ENCODE measurements at regions of chr1 and their contacts with region 1.

Region 1: DNA sequence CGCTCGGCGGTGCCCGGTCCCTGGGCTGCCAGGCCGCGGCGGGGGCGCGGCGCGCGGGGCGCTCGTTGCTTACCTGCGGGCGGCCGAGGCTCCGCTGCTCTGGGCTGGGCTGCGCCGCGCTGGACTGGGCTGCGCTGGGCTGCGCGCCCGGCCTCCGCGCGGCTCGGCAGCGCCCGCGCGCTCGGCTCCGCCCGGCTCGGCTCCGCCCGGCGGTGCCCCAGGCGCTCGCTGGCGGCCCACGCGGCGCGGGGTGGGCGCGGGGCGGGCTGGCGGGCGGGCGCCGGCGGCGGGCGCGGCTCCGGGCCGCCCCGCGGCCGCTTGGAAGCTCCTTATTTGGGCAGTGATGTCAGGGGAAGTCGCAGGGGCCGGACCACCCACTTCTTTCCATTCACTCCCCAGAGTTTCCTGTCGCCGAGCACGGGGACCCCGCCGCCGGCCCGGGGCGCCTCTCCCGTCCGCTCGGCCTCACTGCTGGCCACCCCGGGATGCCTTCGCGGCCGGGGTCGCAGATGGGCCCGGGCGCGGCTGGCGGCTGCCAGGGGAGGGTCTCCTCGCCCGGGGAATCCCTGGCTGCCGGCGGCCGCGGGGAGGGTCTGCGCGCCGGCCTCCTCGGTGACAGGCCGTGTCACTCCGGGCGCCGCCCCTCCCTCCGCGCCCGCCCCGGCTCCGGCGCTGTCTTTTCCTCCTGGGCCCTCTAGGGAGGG is 177.7 kb upstream of the EDN2 start:
- DNase-seq: peak; percentile 75
- H3K4me3 Mint-ChIP-seq: peak overlapping the region; percentile 60
- H3K27ac Mint-ChIP-seq: peak overlapping the region; percentile 28
- H3K4me1 Mint-ChIP-seq: peaks cover 75% of the 10 kb centered on the region
- H3K27me3 Mint-ChIP-seq: no peaks in the 10 kb centered on the region

Region 2: GRCh38 chr1:41639332-41639936 is 22.8 kb before region 1 on chr1:
- intact Hi-C with region 1: loop called (anchors 1 kb)
- DNase-seq: no peak
- H3K4me3 Mint-ChIP-seq: peak overlapping the region; percentile 60
- H3K27ac Mint-ChIP-seq: no peak overlapping the region
- H3K4me1 Mint-ChIP-seq: peaks cover 46% of the 10 kb centered on the region
- H3K27me3 Mint-ChIP-seq: no peaks in the 10 kb centered on the region

Region 3: DNA sequence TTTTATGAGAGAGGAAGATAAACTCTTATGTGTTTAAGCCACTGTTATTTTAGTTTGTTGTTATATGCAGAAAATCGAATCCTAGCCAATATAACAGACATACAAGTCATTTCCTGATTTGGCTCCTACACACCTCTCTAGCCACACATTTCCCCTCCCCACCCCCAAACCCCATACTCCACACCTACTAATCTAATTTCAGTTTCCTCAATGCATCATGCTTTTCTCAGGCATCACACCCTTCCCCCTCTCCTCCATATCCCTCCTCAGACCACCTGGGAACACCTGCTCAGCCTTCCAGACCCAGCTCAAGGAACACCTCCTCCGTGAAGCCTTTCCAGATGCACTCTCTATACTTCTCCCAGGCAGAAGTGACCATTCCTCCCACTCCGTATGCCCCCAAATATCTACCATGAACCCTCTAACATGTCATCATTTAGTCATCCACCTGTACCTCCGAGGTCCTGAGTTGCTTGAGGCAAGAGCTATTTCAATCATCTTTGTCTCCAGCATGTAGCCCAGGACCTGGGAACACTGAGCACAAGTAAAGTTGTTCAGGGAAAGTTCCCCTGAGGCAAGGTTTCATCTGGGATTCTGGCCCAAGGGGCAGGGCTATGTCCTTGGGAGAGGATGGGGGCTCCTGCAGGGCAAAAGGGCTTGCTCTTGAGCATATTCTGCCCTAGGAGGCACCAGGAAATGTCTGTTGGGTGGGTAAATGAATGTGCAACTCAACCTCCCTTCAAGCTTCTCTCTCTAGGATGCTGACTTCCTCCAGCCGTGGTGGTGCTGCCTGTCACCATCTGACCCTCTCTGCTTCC is 129.7 kb after region 1 on chr1:
- intact Hi-C with region 1: loop called (anchors 5 kb)
- DNase-seq: no peak
- H3K4me3 Mint-ChIP-seq: no peak overlapping the region
- H3K27ac Mint-ChIP-seq: peak overlapping the region; percentile 80
- H3K4me1 Mint-ChIP-seq: peaks cover 49% of the 10 kb centered on the region
- H3K27me3 Mint-ChIP-seq: no peaks in the 10 kb centered on the region

Region 4: GRCh38 chr1:41812051-41812450 is 149.8 kb after region 1 on chr1:
- intact Hi-C with region 1: loop called (anchors 5 kb)
- DNase-seq: peak; percentile 49
- H3K4me3 Mint-ChIP-seq: no peak overlapping the region
- H3K27ac Mint-ChIP-seq: no peak overlapping the region
- H3K4me1 Mint-ChIP-seq: peaks cover 49% of the 10 kb centered on the region
- H3K27me3 Mint-ChIP-seq: no peaks in the 10 kb centered on the region